ENCODE measurements at regions of chr15 and their contacts with region 1.

Region 1: DNA sequence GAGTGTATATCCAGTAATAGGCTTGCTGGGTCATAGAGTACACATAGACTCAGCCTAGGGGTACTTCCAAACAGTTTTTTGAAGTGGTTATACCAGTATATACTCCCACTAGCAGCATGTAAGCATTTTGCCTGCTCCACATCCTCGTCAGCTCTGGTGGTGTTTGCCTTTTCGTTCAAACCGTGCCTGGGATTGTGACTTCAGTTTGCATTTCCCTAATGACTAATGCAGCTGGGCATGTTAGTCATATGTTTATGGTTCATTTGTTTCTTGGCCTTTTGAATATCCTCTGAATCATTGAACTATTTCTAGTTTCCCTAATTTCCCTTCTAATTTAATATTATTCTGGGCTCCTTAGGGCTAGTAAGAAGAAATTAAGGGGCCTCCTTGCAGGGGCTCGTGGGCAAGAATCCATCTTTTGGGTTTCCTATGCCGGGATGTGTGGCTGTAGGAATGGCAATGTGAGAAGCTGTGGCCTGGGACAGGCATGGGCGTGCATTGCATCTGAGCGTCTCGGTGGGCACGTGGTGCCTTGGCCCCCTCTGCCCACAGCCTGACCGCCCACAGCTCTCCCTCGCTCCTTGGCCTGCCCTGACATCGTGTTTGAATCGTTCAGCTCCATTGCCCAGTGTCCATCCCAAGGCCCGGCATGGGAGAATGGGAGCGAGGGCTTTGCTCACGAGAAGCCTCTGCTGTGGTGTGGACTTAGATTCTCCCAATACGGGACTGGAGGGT is 26.4 kb downstream of the FAH start:
- DNase-seq: no peak
- ATAC-seq: peak in 1 of 2 donors; percentile 27
- H3K4me3 ChIP-seq: no peak overlapping the region
- H3K27ac ChIP-seq: peak overlapping the region; percentile 11 to 67 (median 28)
- H3K4me1 ChIP-seq: peaks cover 23 to 34% of the 10 kb centered on the region in 2 donors
- H3K27me3 ChIP-seq: no peaks in the 10 kb centered on the region
- CTCF ChIP-seq: no peak
- POLR2A ChIP-seq: peak in 1 of 2 donors; percentile 50

Region 2: DNA sequence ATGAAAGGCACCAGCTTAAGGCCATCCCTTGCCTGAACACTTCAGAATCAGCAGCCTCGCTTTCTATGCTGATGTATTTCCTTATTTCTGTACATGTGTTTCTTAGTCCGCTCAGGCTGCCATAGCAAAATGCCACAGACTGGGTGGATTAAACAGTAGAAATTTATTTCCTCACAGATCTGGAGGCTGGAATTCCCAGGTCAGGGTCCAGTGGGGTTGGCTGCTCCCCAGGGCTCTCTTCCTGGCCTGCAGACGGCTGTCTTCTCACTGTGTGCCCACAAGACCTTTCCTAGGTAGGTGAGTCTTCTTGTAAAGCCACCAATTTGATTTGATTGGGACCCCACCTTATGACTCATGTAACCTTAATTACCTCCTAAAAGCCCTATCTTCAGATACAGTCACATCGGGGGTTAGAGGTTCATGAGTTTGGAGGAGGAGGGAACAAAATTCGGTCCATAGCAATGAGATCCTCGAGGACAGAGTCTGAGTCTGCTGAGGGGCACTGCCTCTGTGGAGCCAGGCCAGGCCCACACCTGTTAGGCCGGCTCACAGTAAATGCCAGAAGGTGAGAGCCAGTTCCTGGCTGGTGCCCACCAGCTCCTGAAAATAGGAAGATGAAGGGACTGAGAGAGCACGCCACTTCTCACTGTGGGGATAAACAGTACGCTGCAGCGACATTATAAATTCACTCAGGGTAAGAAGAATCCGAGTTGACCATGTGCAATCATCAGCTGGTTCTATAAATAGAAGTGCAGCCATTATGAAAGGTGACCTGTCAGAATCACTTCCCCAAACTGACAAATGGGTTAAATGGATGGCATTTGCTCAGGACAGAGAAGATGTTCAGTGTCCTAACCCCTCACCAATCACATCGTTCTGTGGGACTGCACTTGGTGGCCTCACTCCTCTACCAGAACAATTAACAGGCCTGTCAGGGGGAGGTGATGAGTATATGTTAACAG is 31.7 kb after region 1 on chr15:
- in situ Hi-C with region 1: no loop called
- intact Hi-C with region 1: loop called (anchors 5 kb)
- DNase-seq: peak in 1 of 2 donors; percentile 48
- ATAC-seq: peak; percentile 78 to 85
- H3K4me3 ChIP-seq: peak overlapping the region in 1 of 4 donors; percentile 21
- H3K27ac ChIP-seq: peak overlapping the region; percentile 64 to 78 (median 68)
- H3K4me1 ChIP-seq: peaks cover 3 to 19% of the 10 kb centered on the region in 2 donors
- H3K27me3 ChIP-seq: no peaks in the 10 kb centered on the region
- CTCF ChIP-seq: no peak
- POLR2A ChIP-seq: no peak